HepG2 (cell line): ENCODE measurements at regions of chr1 and their contacts with region 1.

Region 1: GRCh38 chr1:229109320-229109761 is 161.6 kb upstream of the RAB4A start:
- DNase-seq: no peak
- ATAC-seq: peak; percentile 13; the same call in 2 of the 3 replicates
- H3K4me3 ChIP-seq: no peak overlapping the region
- H3K27ac ChIP-seq: peak overlapping the region; percentile 68
- H3K4me1 ChIP-seq: peaks cover 100% of the 10 kb centered on the region
- H3K27me3 ChIP-seq: no peaks in the 10 kb centered on the region
- CTCF ChIP-seq: no peak
- EP300 ChIP-seq: no peak
- POLR2A ChIP-seq: no peak
- RAD21 ChIP-seq: no peak

Region 2: DNA sequence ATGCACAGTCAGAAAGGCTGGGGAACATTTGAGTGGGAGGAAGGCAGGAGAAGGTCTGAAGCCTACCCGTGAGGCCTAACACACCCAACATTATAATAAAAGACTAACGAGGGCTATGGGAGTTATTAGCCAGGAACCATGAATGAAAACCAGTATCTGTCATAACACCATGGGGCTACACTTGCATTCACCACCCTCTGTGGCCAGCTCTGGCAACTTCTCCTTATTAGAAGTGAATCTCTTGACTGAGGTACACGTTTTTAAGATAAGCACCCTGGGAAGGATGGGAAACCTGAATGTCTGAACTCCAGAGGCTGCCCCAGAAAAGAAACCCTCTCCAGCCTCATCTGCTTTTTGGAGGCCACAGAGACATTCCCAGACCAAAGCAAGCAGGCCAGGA is 42.8 kb before region 1 on chr1:
- CTCF ChIA-PET with region 1: no interaction called
- POLR2A ChIA-PET with region 1: no interaction called
- in situ Hi-C with region 1: no loop called
- intact Hi-C with region 1: no loop called
- DNase-seq: no peak
- ATAC-seq: no peak
- H3K4me3 ChIP-seq: no peak overlapping the region
- H3K27ac ChIP-seq: no peak overlapping the region
- H3K4me1 ChIP-seq: peaks cover 87% of the 10 kb centered on the region
- H3K27me3 ChIP-seq: no peaks in the 10 kb centered on the region
- CTCF ChIP-seq: no peak
- EP300 ChIP-seq: no peak
- POLR2A ChIP-seq: no peak
- RAD21 ChIP-seq: no peak

Region 3: GRCh38 chr1:229098903-229099578 is 10.3 kb before region 1 on chr1:
- CTCF ChIA-PET with region 1: no interaction called
- POLR2A ChIA-PET with region 1: interaction called, 4 read pairs
- in situ Hi-C with region 1: no loop called
- intact Hi-C with region 1: loop called (anchors 2 kb)
- DNase-seq: peak; percentile 94
- ATAC-seq: peak; percentile 99
- H3K4me3 ChIP-seq: peak overlapping the region in 1 of 3 experiments; percentile 38; a peak in 2 of 6 replicates
- H3K27ac ChIP-seq: peak overlapping the region; percentile 78
- H3K4me1 ChIP-seq: peaks cover 63% of the 10 kb centered on the region
- H3K27me3 ChIP-seq: no peaks in the 10 kb centered on the region
- CTCF ChIP-seq: peak; percentile 50
- EP300 ChIP-seq: peak; percentile 64 to 88; a peak in 3 of 4 replicates
- POLR2A ChIP-seq: peak; percentile 31 to 32; a peak in 1 of 4 replicates
- RAD21 ChIP-seq: peak; percentile 65; the same call in 1 of the 2 replicates

Region 4: GRCh38 chr1:229148041-229148671 is 38.8 kb after region 1 on chr1:
- CTCF ChIA-PET with region 1: no interaction called
- POLR2A ChIA-PET with region 1: no interaction called
- in situ Hi-C with region 1: no loop called
- intact Hi-C with region 1: no loop called
- DNase-seq: peak; percentile 94
- ATAC-seq: peak; percentile 98
- H3K4me3 ChIP-seq: peak overlapping the region in 1 of 3 experiments; percentile 42; a peak in 2 of 6 replicates
- H3K27ac ChIP-seq: peak overlapping the region; percentile 87
- H3K4me1 ChIP-seq: peaks cover 40% of the 10 kb centered on the region
- H3K27me3 ChIP-seq: no peaks in the 10 kb centered on the region
- CTCF ChIP-seq: peak; percentile 65
- EP300 ChIP-seq: peak; percentile 47 to 85; a peak in 3 of 4 replicates
- POLR2A ChIP-seq: peak in 1 of 2 experiments; percentile 53; a peak in 2 of 4 replicates
- RAD21 ChIP-seq: peak; percentile 66